Mucosa of descending colon (tissue), 3 donors: ENCODE measurements at regions of chr18 and their contacts with region 1.

Region 1: GRCh38 chr18:10851824-10852319 is 297.5 kb downstream of the PIEZO2 start:
- DNase-seq: no peak
- ATAC-seq: no peak
- H3K4me3 ChIP-seq: no peak overlapping the region
- H3K4me1 ChIP-seq: no peaks in the 10 kb centered on the region
- CTCF ChIP-seq: peak; percentile 30

Region 2: DNA sequence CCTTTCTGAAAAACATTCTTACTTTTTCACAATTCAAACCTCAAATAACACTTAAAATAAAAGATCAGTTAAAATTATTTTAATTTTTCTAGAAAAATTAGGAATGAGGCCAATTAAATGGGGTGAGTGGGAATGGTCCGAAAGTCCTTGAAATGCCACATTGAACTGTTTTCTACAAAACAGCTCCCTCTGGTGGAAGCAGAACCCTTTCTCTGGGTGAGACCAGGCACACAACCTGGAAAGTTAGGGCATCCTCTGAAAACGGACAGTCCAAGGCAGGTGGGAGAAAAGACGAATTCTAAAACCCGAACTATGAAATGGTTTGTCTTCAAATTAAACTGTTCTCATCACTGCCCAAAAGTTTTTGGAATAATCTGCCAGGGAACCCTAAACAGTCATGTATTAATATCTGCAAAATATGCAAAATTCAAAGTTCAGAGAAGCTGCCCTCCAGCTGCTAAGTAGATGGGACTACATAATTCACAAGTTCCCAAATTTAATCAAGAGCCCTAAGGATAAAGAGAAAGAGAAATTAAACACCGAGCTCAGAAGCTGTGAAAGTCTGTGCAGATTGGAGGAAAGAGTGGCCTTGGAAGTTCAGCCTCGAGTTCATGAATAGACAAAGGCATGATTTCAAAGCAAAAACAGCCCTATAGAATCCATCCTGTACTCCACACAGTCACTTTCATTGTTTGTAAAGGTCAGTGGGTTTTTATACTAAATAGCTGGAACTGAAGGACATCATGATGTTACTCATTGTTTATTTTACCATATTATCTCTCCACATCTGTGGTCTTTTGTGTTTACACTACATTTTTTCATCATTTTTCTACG is 189.2 kb after region 1 on chr18:
- intact Hi-C with region 1: loop called (anchors 5 kb)
- DNase-seq: peak in 1 of 3 donors; percentile 84
- ATAC-seq: peak; percentile 44
- H3K4me3 ChIP-seq: no peak overlapping the region
- H3K4me1 ChIP-seq: no peaks in the 10 kb centered on the region
- CTCF ChIP-seq: no peak